CD8-positive, alpha-beta memory T cell (primary cell): ENCODE measurements at regions of chr10 and their contacts with region 1.

Region 1: DNA sequence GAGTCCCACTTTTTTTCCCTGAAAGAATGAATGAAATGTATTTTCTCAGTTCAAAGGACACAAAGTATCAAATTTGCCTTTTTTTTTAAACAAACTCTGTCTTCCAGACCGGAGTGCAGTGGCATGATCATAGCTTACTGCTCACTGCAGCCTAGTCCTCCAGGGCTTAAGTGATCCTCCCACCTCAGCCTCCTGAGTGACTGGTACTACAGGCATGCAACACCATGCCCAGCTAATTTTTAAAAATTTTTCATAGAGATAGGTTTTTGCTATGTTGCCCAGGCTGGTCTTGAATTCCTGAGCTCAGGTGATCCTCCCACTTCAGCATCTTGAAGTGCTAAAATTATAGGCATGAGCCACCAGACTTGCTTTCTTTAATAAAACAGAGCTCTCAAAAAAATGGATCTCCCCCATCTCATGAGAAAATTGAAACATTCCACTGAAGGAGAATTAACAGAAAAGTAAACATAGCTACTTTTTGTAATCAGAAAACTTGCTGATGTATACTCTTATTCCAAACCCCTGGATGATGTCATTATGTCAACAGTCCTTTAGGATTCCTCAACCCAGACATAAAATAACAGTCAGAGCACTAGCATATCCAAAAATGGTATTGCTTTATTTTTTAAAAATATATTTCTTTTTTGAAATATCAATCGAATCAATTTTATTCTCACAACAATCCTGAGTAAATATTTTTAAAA is 12.3 kb upstream of the TRDMT1 start:
- DNase-seq: no peak
- H3K4me3 ChIP-seq: no peak overlapping the region
- H3K4me3 Mint-ChIP-seq: no peak overlapping the region
- H3K27ac ChIP-seq: no peak overlapping the region
- H3K27ac Mint-ChIP-seq: peak overlapping the region in 1 of 8 donors; percentile 24
- H3K4me1 ChIP-seq: peaks cover 14% of the 10 kb centered on the region
- H3K4me1 Mint-ChIP-seq: peaks cover 12 to 33% (median 20%) of the 10 kb centered on the region in 3 donors
- H3K27me3 ChIP-seq: no peaks in the 10 kb centered on the region
- H3K27me3 Mint-ChIP-seq: no peaks in the 10 kb centered on the region

Region 2: GRCh38 chr10:17190602-17191001 is 23.2 kb before region 1 on chr10:
- CTCF ChIA-PET with region 1: no interaction called
- POLR2A ChIA-PET with region 1: no interaction called
- DNase-seq: no peak
- H3K4me3 ChIP-seq: no peak overlapping the region
- H3K4me3 Mint-ChIP-seq: no peak overlapping the region
- H3K27ac ChIP-seq: no peak overlapping the region
- H3K27ac Mint-ChIP-seq: peak overlapping the region in 3 of 8 donors; percentile 4 to 62 (median 12)
- H3K4me1 ChIP-seq: no peaks in the 10 kb centered on the region
- H3K4me1 Mint-ChIP-seq: peaks cover 4 to 10% (median 7%) of the 10 kb centered on the region in 3 donors
- H3K27me3 ChIP-seq: no peaks in the 10 kb centered on the region
- H3K27me3 Mint-ChIP-seq: no peaks in the 10 kb centered on the region

Region 3: GRCh38 chr10:17200912-17201793 is 12.6 kb before region 1 on chr10 and contains the start of gene TRDMT1:
- CTCF ChIA-PET with region 1: interaction called, 10 read pairs
- POLR2A ChIA-PET with region 1: interaction called, 3 read pairs
- DNase-seq: peak; percentile 70 to 87 (median 80)
- H3K4me3 ChIP-seq: peak within 1 kb of the TSS; percentile 90
- H3K4me3 Mint-ChIP-seq: peak within 1 kb of the TSS; percentile 89 to 99 (median 93)
- H3K27ac ChIP-seq: peak within 1 kb of the TSS; percentile 95
- H3K27ac Mint-ChIP-seq: peak within 1 kb of the TSS; percentile 96 to 100 (median 98)
- H3K4me1 ChIP-seq: peaks cover 21% of the 10 kb centered on the region
- H3K4me1 Mint-ChIP-seq: peaks cover 27 to 52% (median 49%) of the 10 kb centered on the region in 3 donors
- H3K27me3 ChIP-seq: no peaks in the 10 kb centered on the region
- H3K27me3 Mint-ChIP-seq: no peaks in the 10 kb centered on the region
- total RNA-seq, gene TRDMT1: 7.3 to 9.8 TPM

Region 4: DNA sequence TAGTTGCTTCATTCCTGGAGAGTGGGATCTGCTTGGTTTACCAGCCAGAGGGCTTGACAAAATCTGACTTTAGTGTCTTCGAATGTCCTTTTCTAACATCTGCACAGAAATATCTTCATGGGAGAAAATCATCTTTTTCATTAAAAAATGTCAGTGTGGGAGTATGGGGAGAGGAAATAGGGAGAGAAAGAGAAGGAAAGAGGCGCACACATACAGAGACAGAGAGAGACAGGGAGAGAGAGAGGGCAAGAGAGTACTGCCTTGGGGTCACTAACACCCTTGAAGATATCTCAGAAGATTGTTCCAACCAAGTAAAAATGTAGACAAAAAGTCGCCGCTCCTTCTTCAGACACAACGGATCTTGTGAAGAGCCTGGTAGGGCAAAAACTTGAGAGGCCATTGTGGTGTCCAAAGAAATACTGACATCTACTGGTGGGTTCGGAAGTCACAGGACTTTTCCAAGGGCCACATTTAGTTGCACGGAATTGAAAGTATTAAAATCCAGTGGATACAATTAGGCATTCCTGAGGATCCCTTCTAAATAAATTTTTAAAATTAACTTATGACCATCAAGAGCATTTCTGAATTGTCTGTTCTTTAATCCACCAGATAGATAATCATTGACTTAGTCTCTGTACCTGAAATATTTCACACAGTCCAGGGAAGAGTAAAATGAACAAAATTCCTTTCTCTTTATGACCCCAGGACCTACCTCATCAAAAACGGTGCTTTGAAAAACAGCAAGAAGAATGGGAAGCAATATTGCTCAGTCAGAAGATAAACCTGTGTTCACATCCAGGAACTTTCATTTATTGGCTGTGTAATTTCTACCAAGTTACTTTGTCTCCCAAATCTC is 43.9 kb after region 1 on chr10:
- CTCF ChIA-PET with region 1: no interaction called
- POLR2A ChIA-PET with region 1: no interaction called
- DNase-seq: peak; percentile 12 to 63 (median 55)
- H3K4me3 ChIP-seq: no peak overlapping the region
- H3K4me3 Mint-ChIP-seq: peak overlapping the region in 2 of 7 donors; percentile 1 to 14
- H3K27ac ChIP-seq: no peak overlapping the region
- H3K27ac Mint-ChIP-seq: no peak overlapping the region
- H3K4me1 ChIP-seq: no peaks in the 10 kb centered on the region
- H3K4me1 Mint-ChIP-seq: peaks cover 4 to 6% (median 5%) of the 10 kb centered on the region in 3 donors
- H3K27me3 ChIP-seq: no peaks in the 10 kb centered on the region
- H3K27me3 Mint-ChIP-seq: peaks cover 0 to 2% of the 10 kb centered on the region in 2 donors